ENCODE measurements at regions of chr1 and their contacts with region 1.

Region 1: GRCh38 chr1:40385437-40386358 is 12.2 kb downstream of the SMAP2 start:
- DNase-seq: peak; percentile 59
- H3K4me3 Mint-ChIP-seq: peak overlapping the region; percentile 70
- H3K27ac Mint-ChIP-seq: peak overlapping the region; percentile 99
- H3K4me1 Mint-ChIP-seq: peaks cover 91% of the 10 kb centered on the region
- H3K27me3 Mint-ChIP-seq: no peaks in the 10 kb centered on the region

Region 2: DNA sequence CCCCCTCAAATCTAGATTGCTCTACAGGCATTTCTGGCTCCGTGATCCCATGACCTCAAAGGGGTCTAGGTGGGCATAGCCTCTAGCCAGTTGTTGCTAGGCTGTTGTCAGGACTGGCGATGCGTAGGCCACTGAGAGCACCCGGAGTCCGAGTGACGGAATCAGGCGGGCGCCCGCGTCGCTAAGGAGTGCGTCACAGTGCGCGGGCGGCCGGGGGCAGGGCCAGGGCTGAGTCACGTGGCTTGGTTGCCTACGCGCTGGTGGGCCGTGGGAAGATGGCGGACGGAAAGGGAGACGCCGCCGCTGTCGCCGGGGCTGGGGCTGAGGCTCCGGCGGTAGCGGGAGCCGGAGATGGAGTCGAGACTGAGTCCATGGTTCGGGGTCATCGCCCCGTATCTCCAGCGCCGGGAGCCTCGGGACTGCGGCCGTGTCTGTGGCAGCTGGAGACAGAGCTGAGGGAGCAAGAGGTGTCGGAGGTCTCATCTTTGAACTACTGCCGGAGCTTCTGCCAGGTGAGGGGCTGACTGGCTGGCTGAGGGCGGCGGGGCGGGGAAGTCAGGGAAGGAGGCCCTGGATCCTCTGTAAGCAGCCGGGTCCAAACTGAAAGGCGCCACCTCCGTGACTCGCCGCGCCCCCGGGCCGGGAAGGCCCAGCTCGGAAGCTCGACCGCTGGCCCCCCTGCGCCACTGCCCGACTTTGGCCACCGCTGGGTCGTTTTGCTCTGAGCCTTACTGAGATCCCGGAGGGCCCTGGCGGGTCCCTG is 224.4 kb before region 1 on chr1 and contains the start of gene RLF:
- CTCF ChIA-PET with region 1: no interaction called
- POLR2A ChIA-PET with region 1: interaction called, 15 read pairs
- DNase-seq: peak; percentile 96
- H3K4me3 Mint-ChIP-seq: no peak within 1 kb of the TSS
- H3K27ac Mint-ChIP-seq: no peak within 1 kb of the TSS
- H3K4me1 Mint-ChIP-seq: peaks cover 5% of the 10 kb centered on the region
- H3K27me3 Mint-ChIP-seq: no peaks in the 10 kb centered on the region
- total RNA-seq, gene RLF: 23.8 to 24.6 TPM

Region 3: GRCh38 chr1:40305457-40305856 is 80.2 kb before region 1 on chr1:
- CTCF ChIA-PET with region 1: no interaction called
- POLR2A ChIA-PET with region 1: no interaction called
- DNase-seq: no peak
- H3K4me3 Mint-ChIP-seq: no peak overlapping the region
- H3K27ac Mint-ChIP-seq: no peak overlapping the region
- H3K4me1 Mint-ChIP-seq: no peaks in the 10 kb centered on the region
- H3K27me3 Mint-ChIP-seq: no peaks in the 10 kb centered on the region

Region 4: GRCh38 chr1:40373338-40374283 is 12.1 kb before region 1 on chr1 and contains the start of gene SMAP2:
- CTCF ChIA-PET with region 1: interaction called, 48 read pairs
- POLR2A ChIA-PET with region 1: interaction called, 997 read pairs
- DNase-seq: peak; percentile 96
- H3K4me3 Mint-ChIP-seq: peak within 1 kb of the TSS; percentile 99
- H3K27ac Mint-ChIP-seq: peak within 1 kb of the TSS; percentile 99
- H3K4me1 Mint-ChIP-seq: peaks cover 49% of the 10 kb centered on the region
- H3K27me3 Mint-ChIP-seq: no peaks in the 10 kb centered on the region
- total RNA-seq, gene SMAP2: 172 to 173 TPM

Region 5: DNA sequence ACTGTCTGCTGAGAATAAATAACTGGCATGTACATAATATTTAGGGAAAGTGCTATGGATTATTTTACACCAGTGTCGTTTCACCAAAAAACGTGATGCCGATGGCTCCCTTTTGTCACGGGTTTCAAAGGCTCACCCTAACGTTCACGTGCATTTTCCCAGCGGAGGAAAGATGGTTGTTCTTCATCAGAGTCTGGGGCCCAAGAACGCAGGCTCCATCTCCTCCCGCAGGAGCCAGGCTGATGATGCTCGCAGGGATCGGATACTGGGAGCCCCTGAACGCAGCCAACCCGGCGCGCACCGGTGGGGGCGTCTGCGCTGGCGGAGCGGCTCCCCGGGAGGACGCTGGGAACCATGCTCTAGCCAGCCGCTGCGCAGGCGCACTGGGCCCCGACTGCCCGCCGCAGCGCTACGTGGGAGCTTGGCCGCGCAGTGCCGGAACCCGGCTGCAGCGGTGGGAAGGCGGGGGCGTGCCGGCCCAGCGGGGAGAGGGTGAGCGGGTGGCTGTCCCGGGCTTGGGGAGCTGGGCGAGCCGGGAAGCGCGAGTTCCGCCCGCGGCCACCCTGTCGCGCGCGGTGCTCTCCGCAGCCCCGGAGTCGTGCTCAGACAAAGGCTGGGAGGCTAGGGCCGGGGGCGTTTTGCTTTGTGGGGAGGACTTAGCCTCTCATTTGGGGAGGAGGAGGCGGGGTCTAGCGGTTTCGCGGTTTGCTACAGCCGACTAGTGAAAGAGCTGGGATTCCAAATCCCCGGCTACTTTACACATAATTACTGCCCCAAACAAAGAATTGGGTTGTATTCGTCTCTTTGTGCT is 64.2 kb after region 1 on chr1 and contains the start of gene ZFP69B:
- CTCF ChIA-PET with region 1: no interaction called
- POLR2A ChIA-PET with region 1: interaction called, 11 read pairs
- DNase-seq: peak; percentile 90
- H3K4me3 Mint-ChIP-seq: peak within 1 kb of the TSS; percentile 78
- H3K27ac Mint-ChIP-seq: peak within 1 kb of the TSS; percentile 82
- H3K4me1 Mint-ChIP-seq: peaks cover 23% of the 10 kb centered on the region
- H3K27me3 Mint-ChIP-seq: no peaks in the 10 kb centered on the region
- total RNA-seq, gene ZFP69B: 5.4 to 5.9 TPM

Region 6: GRCh38 chr1:40475268-40475667 is 89.6 kb after region 1 on chr1:
- CTCF ChIA-PET with region 1: no interaction called
- POLR2A ChIA-PET with region 1: no interaction called
- DNase-seq: no peak
- H3K4me3 Mint-ChIP-seq: no peak overlapping the region
- H3K27ac Mint-ChIP-seq: no peak overlapping the region
- H3K4me1 Mint-ChIP-seq: peaks cover 17% of the 10 kb centered on the region
- H3K27me3 Mint-ChIP-seq: no peaks in the 10 kb centered on the region

Measured in activated CD4-positive, alpha-beta memory T cell treated with anti-CD3 and anti-CD28 coated beads, Interleukin-2, amount 10 ng/mL, durations not matched to agents 7 days and 5 days (primary cell).